Activated CD4-positive, alpha-beta T cell treated with anti-CD3 and anti-CD28 coated beads for 36 hours (primary cell): ENCODE measurements at regions of chr2 and their contacts with region 1.

Region 1: GRCh38 chr2:55327470-55328230 is 58.6 kb upstream of the MTIF2 start:
- DNase-seq: no peak
- ATAC-seq: no peak
- H3K4me3 Mint-ChIP-seq: no peak overlapping the region
- H3K27ac Mint-ChIP-seq: no peak overlapping the region
- H3K4me1 Mint-ChIP-seq: no peaks in the 10 kb centered on the region
- H3K27me3 Mint-ChIP-seq: no peaks in the 10 kb centered on the region

Region 2: DNA sequence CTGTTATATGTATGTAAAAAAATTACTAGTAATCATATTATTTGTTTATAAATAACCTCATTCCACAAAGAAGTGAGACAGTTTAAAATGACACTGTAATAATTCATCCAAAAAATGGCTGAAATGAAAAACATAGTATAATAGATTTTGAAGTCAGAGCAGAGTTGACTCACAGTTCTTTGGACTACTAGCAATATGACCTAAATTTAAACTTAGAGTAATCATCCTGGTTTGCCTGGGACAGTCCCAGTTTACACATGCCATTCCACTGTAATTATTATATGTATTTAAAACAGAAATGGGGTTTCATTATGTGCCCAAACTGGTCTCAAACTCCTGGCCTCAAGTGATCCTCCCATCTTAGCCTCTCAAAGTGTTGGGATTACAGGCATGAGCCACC is 43.7 kb after region 1 on chr2:
- CTCF ChIA-PET with region 1: no interaction called
- POLR2A ChIA-PET with region 1: no interaction called
- intact Hi-C with region 1: loop called in 1 of 2 experiments (anchors 1 kb)
- DNase-seq: no peak
- ATAC-seq: no peak
- H3K4me3 Mint-ChIP-seq: no peak overlapping the region
- H3K27ac Mint-ChIP-seq: no peak overlapping the region
- H3K4me1 Mint-ChIP-seq: no peaks in the 10 kb centered on the region
- H3K27me3 Mint-ChIP-seq: no peaks in the 10 kb centered on the region